CD14-positive monocyte (primary cell): ENCODE measurements at regions of chr7 and their contacts with region 1.

Region 1: GRCh38 chr7:95690367-95690947 is 81.9 kb upstream of the DYNC1I1 start:
- DNase-seq: peak in 2 of 3 donors; percentile 30 to 36
- H3K4me3 ChIP-seq: no peak overlapping the region
- H3K4me3 Mint-ChIP-seq: peak overlapping the region; percentile 42 to 73
- H3K27ac ChIP-seq: no peak overlapping the region
- H3K27ac Mint-ChIP-seq: no peak overlapping the region
- H3K4me1 ChIP-seq: no peaks in the 10 kb centered on the region
- H3K4me1 Mint-ChIP-seq: peaks cover 7% of the 10 kb centered on the region
- H3K27me3 ChIP-seq: no peaks in the 10 kb centered on the region
- H3K27me3 Mint-ChIP-seq: peaks cover 3 to 6% (median 6%) of the 10 kb centered on the region in 3 donors
- CTCF ChIP-seq: peak; percentile 93

Region 2: DNA sequence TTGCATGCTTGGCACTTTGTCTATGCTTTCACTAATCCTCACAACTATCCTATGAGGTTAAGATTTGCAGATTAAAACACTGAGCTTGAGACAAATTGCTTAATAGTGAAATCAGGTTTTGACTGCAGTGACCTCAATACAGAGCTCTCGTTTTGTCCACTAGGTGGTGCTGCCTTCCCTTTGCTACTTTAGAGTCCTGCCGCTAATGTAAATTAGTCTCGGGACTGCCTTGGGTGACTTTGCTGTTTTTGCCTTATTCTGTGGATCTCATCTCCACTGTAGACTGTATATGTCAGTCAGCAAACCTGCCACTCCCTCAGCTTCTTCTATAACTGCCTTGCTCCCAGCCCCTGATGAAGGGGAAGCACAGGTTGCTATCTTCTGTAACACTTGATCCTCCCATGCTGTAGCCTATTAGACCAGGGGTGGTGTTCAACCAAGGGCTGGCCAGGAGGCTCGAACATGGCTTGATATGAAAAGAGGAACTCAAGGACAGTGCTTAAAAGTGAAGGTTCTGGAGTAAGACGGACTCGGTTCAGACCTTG is 178.7 kb before region 1 on chr7:
- intact Hi-C with region 1: loop called (anchors 5 kb)
- DNase-seq: peak; percentile 74 to 85 (median 78)
- H3K4me3 ChIP-seq: peak overlapping the region in 1 of 3 experiments; percentile 12
- H3K4me3 Mint-ChIP-seq: peak overlapping the region; percentile 47 to 59
- H3K27ac ChIP-seq: no peak overlapping the region
- H3K27ac Mint-ChIP-seq: peak overlapping the region in 3 of 7 donors; percentile 48 to 66 (median 48)
- H3K4me1 ChIP-seq: peaks cover 4% of the 10 kb centered on the region in 2 donors
- H3K4me1 Mint-ChIP-seq: peaks cover 6% of the 10 kb centered on the region
- H3K27me3 ChIP-seq: no peaks in the 10 kb centered on the region
- H3K27me3 Mint-ChIP-seq: peaks cover 0 to 2% (median 2%) of the 10 kb centered on the region in 3 donors
- CTCF ChIP-seq: peak; percentile 89

Region 3: DNA sequence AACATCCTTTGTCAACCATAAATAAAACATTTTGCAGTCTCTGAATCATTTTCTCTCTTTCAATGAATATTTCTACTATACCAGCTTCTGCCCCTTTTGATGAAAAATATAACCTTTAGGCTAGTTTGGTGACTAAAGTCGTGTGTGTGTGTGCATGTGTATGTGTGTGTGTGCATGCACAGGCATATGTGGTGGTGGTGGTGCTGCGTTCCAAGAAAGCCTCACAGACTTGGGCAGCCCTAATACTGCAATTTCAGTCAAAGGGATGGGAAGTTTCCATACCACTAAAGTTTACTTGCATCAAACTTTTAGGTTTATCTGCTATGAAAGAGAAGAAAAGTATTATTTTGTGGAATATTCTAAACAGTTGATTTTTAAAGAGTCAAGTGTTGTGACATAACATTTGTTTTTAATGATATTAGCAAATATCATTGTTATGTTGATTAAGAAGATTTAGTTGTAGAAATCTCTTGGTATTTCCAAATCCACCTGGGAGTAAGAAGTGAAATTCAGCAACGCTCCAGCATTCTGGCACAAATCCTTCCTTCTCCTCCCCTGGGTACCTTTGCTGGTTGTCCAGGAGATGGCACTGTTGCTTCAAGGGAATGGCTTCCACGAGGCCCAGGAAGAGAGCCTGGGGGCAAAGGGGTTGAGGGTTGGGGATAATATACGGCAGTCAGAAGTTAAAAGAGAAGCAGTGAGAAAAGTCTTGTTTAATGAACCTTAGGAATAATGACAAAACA is 163.3 kb before region 1 on chr7:
- intact Hi-C with region 1: loop called (anchors 5 kb)
- DNase-seq: peak; percentile 43 to 60 (median 56)
- H3K4me3 ChIP-seq: no peak overlapping the region
- H3K4me3 Mint-ChIP-seq: no peak overlapping the region
- H3K27ac ChIP-seq: no peak overlapping the region
- H3K27ac Mint-ChIP-seq: no peak overlapping the region
- H3K4me1 ChIP-seq: no peaks in the 10 kb centered on the region
- H3K4me1 Mint-ChIP-seq: peaks cover 8% of the 10 kb centered on the region
- H3K27me3 ChIP-seq: no peaks in the 10 kb centered on the region
- H3K27me3 Mint-ChIP-seq: peaks cover 0 to 7% (median 2%) of the 10 kb centered on the region in 3 donors
- CTCF ChIP-seq: peak; percentile 91

Region 4: GRCh38 chr7:95596198-95597063 is 94.0 kb before region 1 on chr7 and contains the start of gene PDK4:
- intact Hi-C with region 1: loop called in 1 of 2 experiments (anchors 5 kb)
- DNase-seq: peak; percentile 63 to 76 (median 68)
- H3K4me3 ChIP-seq: peak within 1 kb of the TSS; percentile 58 to 88 (median 84)
- H3K4me3 Mint-ChIP-seq: peak within 1 kb of the TSS; percentile 96 to 99
- H3K27ac ChIP-seq: peak within 1 kb of the TSS; percentile 74 to 87
- H3K27ac Mint-ChIP-seq: peak within 1 kb of the TSS; percentile 92 to 97 (median 95)
- H3K4me1 ChIP-seq: peaks cover 42 to 56% of the 10 kb centered on the region in 2 donors
- H3K4me1 Mint-ChIP-seq: peaks cover 54% of the 10 kb centered on the region
- H3K27me3 ChIP-seq: no peaks in the 10 kb centered on the region
- H3K27me3 Mint-ChIP-seq: no peaks in the 10 kb centered on the region
- CTCF ChIP-seq: no peak
- polyA plus RNA-seq, gene PDK4: 2.2 to 26.0 (median 12.4) TPM

Region 5: DNA sequence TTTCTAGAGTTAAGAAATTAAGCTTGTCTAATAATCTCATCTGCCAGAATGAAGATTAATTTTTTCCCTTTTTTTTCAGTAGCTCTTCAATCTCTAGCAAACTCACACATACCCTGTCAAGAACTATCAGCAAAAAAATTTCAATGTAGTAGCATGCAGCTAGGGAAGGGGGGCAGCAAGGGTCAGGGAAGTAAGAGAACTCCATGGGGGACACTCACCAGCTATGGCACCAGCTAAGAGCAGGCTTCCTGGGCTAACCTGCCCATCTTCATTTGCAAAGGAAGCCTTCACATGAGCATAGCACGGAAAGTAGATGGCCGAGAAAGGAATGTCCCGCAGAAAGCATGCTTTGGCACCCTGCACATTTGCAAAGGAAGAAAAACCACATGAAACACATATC is 441.1 kb after region 1 on chr7:
- intact Hi-C with region 1: no loop called
- DNase-seq: no peak
- H3K4me3 ChIP-seq: no peak overlapping the region
- H3K4me3 Mint-ChIP-seq: no peak overlapping the region
- H3K27ac ChIP-seq: no peak overlapping the region
- H3K27ac Mint-ChIP-seq: peak overlapping the region in 1 of 7 donors; percentile 38
- H3K4me1 ChIP-seq: no peaks in the 10 kb centered on the region
- H3K4me1 Mint-ChIP-seq: no peaks in the 10 kb centered on the region
- H3K27me3 ChIP-seq: no peaks in the 10 kb centered on the region
- H3K27me3 Mint-ChIP-seq: no peaks in the 10 kb centered on the region
- CTCF ChIP-seq: no peak